Posterior vena cava (tissue), 2 donors: ENCODE measurements at regions of chr4 and their contacts with region 1.

Region 1: DNA sequence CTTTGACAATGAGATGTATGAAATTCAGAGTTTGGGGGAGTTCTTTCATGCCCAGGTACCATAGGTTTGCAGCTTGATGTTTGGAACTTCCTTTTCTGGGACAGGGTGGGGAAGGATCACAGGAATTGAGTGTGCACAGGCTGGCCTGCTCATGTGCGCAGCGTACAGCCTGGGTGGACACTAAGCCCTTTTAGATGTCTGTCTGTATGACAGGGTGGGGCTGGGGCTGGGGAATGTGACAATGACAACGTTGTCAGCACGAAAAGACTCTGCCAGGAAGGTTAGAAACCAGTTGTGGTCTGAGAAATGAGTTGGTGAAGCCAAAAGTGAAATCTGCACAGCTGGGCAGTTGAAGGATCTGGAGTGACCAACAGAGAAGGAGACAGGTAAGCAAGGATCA is 47.4 kb downstream of the WWC2 start:
- DNase-seq: no peak

Region 2: DNA sequence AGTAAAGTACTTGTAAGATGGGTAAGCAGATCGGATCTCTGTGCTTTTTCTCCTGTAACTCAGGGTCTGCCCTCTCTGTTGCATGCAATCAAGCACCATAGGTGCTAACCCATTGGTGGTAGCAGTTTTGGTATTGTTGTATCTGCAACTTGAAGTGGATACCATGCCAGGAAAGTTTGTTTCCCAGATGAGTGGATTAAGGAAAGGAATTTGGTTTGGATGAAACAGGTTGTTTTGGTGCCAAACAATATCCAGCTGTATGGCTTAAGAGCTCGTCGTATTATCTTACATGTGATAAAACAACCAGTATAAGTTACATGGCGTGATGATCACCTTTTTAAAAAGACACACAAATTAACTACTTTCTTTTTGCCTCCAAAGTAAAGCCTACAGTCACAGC is 1184.2 kb before region 1 on chr4:
- intact Hi-C with region 1: loop called in 1 of 2 experiments (anchors 5 kb)
- DNase-seq: no peak

Region 3: GRCh38 chr4:182409271-182409670 is 737.2 kb before region 1 on chr4:
- intact Hi-C with region 1: no loop called
- DNase-seq: no peak